Body of pancreas (tissue), 4 donors: ENCODE measurements at regions of chr10 and their contacts with region 1.

Region 1: DNA sequence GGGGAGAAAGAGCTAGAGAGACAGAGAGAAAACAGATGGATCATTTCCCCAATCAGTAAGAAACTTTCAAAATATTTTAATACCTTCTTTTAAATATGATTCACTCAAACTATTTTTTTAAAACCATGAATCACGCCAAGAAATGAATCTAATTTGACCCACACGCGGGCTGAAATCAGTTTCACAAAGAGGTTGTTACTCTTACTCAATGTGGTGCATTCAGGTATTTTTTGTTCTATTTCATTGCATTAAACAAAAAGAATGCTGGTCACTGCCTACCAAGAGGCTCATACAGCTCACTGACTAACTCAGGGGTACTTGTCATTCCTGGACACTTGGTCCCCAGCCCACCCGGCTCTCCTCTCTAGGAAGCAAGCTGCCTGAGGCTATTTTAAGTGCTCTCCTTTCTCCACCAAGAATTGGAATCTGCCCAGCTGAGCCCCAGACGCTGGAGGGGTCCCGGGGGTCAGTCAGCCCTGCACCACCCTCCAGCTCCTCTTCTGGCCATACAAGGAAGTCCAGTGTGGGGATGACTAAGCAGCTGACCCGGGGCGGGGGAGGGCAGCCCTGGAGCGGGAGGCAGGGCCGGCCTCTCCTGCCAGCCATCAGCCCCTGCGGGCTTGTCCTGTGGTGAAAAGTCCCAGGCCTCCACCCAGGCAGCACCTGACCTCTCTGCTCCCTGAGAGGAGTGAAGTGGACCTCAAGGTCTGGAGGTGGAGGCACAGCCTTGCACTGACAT is 21.7 kb upstream of the PFKP start:
- DNase-seq: peak in 2 of 4 donors; percentile 15 to 34
- ATAC-seq: no peak
- H3K4me3 ChIP-seq: no peak overlapping the region
- H3K27ac ChIP-seq: no peak overlapping the region
- H3K4me1 ChIP-seq: no peaks in the 10 kb centered on the region
- H3K27me3 ChIP-seq: no peaks in the 10 kb centered on the region
- CTCF ChIP-seq: peak in 1 of 7 experiments; percentile 13
- POLR2A ChIP-seq: no peak

Region 2: GRCh38 chr10:2908851-2909630 is 136.6 kb before region 1 on chr10:
- intact Hi-C with region 1: no loop called
- DNase-seq: no peak
- ATAC-seq: no peak
- H3K4me3 ChIP-seq: no peak overlapping the region
- H3K27ac ChIP-seq: no peak overlapping the region
- H3K4me1 ChIP-seq: peaks cover 8% of the 10 kb centered on the region
- H3K27me3 ChIP-seq: no peaks in the 10 kb centered on the region
- CTCF ChIP-seq: no peak
- POLR2A ChIP-seq: no peak

Region 3: GRCh38 chr10:2927958-2928840 is 117.4 kb before region 1 on chr10:
- intact Hi-C with region 1: loop called (anchors 5 kb)
- DNase-seq: peak; percentile 73 to 80 (median 76)
- ATAC-seq: peak; percentile 56
- H3K4me3 ChIP-seq: no peak overlapping the region
- H3K27ac ChIP-seq: no peak overlapping the region
- H3K4me1 ChIP-seq: peaks cover 4% of the 10 kb centered on the region
- H3K27me3 ChIP-seq: no peaks in the 10 kb centered on the region
- CTCF ChIP-seq: peak; percentile 53 to 78 (median 72)
- POLR2A ChIP-seq: no peak